ENCODE measurements at regions of chr3 and their contacts with region 1.

Region 1: DNA sequence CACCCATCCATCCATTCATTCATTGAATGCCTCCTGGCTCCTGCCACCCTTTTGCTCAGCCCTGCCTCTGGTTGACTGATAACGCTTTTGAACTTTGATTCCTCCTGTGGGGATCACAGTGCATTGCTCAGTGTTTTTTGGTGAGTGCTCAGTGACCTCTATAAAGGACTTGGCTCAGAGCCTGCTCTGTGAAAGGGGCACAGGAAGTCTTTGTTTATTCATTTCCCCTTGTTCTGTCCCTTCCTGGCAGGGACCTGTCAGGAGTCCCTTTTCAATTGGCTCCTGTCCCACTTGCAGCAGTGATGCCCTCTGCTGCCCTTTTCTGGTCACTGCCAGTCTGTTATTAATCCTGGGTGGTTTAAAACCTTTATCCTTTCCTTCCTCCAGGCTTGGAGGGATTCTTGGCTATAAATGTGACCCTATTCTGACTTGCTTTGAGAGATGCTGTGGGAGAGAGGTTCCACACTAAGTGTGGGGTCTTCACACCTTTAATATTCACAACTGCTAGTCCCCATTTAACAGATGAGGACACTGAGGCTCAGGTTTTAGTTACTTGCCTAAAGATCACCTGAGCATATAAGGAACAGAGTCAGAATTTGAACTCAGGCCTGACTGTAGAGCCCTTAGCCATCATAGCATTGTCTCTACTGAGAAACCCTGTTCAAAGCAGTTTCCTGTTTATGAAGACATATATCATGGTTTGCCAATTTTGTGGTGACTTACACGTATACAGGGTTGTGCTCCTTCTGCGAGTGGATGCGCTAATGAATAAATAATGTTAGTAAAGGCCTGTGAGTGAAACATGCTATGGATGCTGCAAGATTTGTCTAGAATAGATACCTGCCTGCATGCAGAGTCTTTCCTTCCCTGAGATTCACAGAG is 23.2 kb upstream of the TATDN2 start:
- DNase-seq: no peak
- H3K4me3 ChIP-seq: no peak overlapping the region
- H3K27ac ChIP-seq: no peak overlapping the region
- H3K4me1 ChIP-seq: peaks cover 0 to 17% (median 9%) of the 10 kb centered on the region in 4 donors
- H3K27me3 ChIP-seq: no peaks in the 10 kb centered on the region
- CTCF ChIP-seq: peak; percentile 81 to 90 (median 87)
- EP300 ChIP-seq: no peak
- POLR2A ChIP-seq: no peak

Region 2: GRCh38 chr3:9715764-9716437 is 509.1 kb before region 1 on chr3:
- intact Hi-C with region 1: loop called (anchors 10 kb)
- DNase-seq: peak; percentile 94
- H3K4me3 ChIP-seq: no peak overlapping the region
- H3K27ac ChIP-seq: peak overlapping the region; percentile 55 to 75 (median 68)
- H3K4me1 ChIP-seq: peaks cover 3 to 18% (median 14%) of the 10 kb centered on the region in 4 donors
- H3K27me3 ChIP-seq: no peaks in the 10 kb centered on the region
- CTCF ChIP-seq: peak; percentile 75 to 90 (median 88)
- EP300 ChIP-seq: no peak
- POLR2A ChIP-seq: no peak

Region 3: DNA sequence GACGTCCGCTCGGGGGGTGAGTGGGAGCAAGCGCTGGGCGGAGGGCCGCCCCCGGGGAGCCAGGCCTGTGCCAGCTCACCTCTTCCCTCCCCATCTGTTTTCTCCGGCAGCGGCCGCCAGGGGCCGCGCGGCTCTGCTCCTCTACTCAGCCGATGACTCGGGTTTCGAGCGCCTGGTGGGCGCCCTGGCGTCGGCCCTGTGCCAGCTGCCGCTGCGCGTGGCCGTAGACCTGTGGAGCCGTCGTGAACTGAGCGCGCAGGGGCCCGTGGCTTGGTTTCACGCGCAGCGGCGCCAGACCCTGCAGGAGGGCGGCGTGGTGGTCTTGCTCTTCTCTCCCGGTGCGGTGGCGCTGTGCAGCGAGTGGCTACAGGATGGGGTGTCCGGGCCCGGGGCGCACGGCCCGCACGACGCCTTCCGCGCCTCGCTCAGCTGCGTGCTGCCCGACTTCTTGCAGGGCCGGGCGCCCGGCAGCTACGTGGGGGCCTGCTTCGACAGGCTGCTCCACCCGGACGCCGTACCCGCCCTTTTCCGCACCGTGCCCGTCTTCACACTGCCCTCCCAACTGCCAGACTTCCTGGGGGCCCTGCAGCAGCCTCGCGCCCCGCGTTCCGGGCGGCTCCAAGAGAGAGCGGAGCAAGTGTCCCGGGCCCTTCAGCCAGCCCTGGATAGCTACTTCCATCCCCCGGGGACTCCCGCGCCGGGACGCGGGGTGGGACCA is 292.0 kb before region 1 on chr3:
- intact Hi-C with region 1: loop called (anchors 10 kb)
- DNase-seq: peak; percentile 95
- H3K4me3 ChIP-seq: peak overlapping the region; percentile 70 to 89 (median 79)
- H3K27ac ChIP-seq: peak overlapping the region; percentile 93 to 99 (median 96)
- H3K4me1 ChIP-seq: peaks cover 22 to 52% (median 38%) of the 10 kb centered on the region in 4 donors
- H3K27me3 ChIP-seq: peaks cover 0 to 8% (median 0%) of the 10 kb centered on the region in 4 donors
- CTCF ChIP-seq: peak; percentile 74 to 84 (median 80)
- EP300 ChIP-seq: no peak
- POLR2A ChIP-seq: no peak

Region 4: DNA sequence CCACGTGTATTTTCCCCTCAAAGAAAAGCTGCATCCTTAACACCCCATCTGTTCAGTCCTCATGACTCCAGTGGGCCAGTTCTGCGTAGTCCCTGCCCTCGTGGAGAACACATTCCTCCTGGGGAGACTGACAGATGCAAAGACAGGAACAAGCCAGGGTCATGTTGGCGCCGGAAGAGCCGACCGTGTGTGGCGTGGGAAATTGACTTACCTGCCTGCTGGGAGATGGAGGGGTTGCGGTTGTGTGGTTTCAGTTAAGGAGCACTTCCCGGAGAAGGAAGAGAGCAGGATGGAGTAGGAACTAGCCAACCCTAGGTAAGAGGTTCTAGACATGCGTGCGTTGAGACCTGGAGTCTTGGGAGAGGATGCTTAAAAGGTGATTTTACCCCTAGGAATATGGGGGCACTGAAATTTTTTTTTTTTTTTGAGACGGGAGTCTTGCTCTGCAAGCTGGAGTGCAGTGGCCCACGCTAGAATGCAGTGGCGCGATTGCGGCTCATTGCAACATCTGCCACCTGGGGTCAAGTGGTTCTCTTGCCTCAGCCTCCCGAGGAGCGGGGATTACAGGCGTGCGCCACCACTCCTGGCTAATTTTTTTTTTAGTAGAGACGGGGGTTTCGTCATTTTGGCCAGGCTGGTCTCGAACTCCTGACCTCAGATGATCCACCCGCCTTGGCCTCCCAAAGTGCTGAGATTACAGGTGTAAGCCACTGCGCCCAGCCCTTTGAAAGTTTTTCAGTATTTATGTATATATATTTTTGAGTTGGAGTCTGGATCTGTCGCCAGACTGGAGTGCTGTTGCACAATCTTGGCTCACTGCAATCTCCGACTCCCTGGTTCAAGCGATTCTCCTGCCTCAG is 82.1 kb before region 1 on chr3:
- intact Hi-C with region 1: loop called (anchors 5 kb)
- DNase-seq: no peak
- H3K4me3 ChIP-seq: peak overlapping the region; percentile 77 to 94 (median 90)
- H3K27ac ChIP-seq: peak overlapping the region; percentile 90 to 96 (median 92)
- H3K4me1 ChIP-seq: peaks cover 23 to 51% (median 40%) of the 10 kb centered on the region in 4 donors
- H3K27me3 ChIP-seq: no peaks in the 10 kb centered on the region
- CTCF ChIP-seq: no peak
- EP300 ChIP-seq: no peak
- POLR2A ChIP-seq: no peak

Region 5: DNA sequence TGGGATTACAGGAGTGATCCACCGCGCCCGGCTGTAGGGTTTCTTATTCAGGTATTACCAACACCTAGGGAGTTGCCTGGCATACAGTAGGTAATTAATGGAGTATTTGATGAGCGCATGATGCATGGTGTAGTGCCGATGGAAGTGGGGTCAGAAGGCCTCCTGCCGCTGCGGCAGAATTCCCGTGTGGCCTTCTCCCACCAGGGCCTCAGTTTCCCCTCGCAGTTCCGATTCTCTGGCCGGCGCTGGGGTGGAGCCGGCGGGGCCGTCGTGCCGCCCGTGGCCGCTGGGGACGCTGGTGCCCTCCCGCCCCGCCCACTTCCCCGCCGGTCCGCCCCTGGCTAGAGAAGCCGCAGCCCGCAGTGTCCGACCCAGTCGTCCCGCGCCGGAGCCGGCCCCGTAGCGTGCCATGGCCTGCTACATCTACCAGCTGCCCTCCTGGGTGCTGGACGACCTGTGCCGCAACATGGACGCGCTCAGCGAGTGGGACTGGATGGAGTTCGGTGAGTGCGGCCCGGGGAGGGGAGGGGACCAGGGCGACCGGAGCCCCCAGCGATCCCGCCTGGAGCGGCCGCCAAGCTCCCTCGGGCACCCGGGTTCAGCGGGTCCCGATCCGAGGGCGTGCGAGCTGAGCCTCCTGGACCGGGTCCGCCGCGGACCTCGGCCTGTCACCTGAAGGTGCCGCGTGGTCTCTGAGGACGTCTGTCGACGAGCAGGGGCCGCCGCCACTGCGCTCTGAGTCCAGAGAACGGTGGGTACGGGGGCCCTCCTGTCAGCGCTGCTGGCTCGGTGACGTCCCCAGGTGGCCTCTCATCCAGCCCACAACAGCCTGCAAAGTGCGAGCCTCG is 60.3 kb before region 1 on chr3 and contains the start of gene IRAK2:
- intact Hi-C with region 1: loop called (anchors 2 kb)
- DNase-seq: no peak
- H3K4me3 ChIP-seq: peak within 1 kb of the TSS; percentile 76 to 96 (median 88)
- H3K27ac ChIP-seq: peak within 1 kb of the TSS; percentile 75 to 81 (median 76)
- H3K4me1 ChIP-seq: peaks cover 2 to 18% (median 12%) of the 10 kb centered on the region in 4 donors
- H3K27me3 ChIP-seq: no peaks in the 10 kb centered on the region
- CTCF ChIP-seq: peak; percentile 87 to 100 (median 95)
- EP300 ChIP-seq: no peak
- POLR2A ChIP-seq: peak; percentile 15
- total RNA-seq, gene IRAK2: 2.5 to 3.2 (median 2.8) TPM